ENCODE measurements at regions of chr22 and their contacts with region 1.

Region 1: DNA sequence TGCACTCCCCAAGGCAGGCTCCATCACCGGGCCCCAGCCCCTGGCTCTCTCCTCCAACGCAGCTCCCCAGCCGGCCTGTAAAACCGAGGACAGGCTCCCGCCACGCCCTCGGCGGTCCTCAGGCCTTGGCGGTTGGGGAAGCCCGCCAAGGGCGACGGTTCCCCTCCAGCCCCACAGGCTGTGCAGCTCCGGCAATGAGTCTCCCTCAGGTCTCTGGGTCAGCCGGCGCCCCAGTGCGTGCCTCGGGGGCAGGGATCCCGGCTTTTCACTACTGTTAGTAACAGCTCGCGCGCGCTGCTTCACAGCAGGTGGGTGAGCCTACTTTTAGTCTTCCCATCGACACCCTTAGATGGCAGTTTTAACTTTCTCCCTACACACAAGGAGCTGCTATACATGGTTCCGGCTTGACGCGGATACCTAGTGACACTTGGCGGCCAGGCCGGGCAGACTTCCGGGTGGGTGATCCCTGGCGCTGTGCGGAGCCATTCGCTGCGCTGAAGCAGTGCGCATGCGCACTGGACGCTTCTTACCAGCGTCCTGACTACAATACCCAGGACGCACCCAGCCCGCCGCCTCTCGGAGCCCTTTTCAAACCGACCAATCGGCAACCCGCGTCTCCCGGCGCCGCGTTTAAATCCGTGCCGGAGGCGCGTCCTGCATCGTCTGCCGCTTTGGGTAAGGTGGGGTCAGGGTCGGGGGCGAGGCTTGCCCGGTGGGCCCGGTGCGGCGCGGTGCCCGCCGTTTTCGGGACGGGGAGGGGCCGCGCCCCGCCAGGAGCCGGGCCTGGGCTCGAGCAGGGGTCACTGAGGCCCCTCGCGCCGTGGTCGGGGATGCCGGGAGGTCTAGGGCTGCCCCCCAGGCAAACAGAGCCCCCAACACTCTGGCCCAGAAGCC is at the start of gene GTSE1:
- DNase-seq: peak; percentile 92 to 100
- ATAC-seq: peak; percentile 93 to 100 (median 95)
- H3K4me3 ChIP-seq: peak within 1 kb of the TSS; percentile 50
- H3K4me3 Mint-ChIP-seq: peak within 1 kb of the TSS; percentile 95
- H3K27ac ChIP-seq: peak within 1 kb of the TSS; percentile 85
- H3K27ac Mint-ChIP-seq: peak within 1 kb of the TSS; percentile 99
- H3K4me1 ChIP-seq: peaks cover 45% of the 10 kb centered on the region
- H3K4me1 Mint-ChIP-seq: peaks cover 48 to 55% of the 10 kb centered on the region in 2 donors
- H3K27me3 ChIP-seq: no peaks in the 10 kb centered on the region
- H3K27me3 Mint-ChIP-seq: no peaks in the 10 kb centered on the region
- CTCF ChIP-seq: peak; percentile 27
- total RNA-seq, gene GTSE1: 2.7 to 4.0 (median 2.9) TPM

Region 2: DNA sequence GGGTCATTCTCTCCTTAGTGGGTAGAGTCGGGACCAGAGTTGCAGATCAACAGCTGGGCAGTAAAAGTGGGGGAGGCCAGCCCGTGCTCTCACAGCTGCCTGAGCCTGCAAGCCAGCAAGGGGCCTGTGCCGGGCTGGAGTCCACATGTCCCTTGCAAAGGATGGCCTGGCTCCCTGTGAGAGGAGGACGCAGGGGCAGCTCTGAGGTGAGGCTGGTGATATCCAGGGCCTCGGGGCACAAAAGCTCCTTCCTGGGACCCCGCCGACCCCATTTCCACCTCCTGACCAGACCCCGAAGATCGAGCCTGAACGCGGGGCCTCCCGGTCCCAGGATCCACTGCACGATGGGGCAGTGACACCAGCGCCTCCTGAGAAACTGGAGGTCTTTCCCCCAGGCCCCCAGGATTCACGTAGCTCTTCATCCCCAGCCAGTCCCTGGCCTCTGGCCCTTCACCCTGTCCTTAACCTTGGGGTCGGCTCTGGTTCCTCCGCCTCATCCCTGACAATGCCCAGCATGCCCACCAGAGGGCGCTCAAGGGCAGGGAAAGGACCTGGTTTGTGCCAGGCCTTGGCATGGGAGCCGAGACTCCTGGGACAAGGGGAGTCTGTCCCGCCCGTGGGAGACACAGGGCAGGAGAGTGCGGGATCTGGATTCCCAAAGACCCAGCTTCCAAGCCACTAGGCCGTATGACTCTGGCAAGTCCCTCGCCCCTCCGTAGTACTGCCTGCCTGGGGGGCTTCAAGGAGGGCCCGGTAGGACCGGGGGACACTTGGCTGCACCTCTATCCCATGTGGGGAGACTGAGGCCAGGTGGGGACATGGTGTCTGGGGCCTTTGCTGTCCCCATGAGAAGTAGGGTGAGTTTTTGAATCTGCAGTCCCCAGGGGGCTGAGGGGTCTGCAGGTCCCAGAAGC is 301.8 kb before region 1 on chr22:
- intact Hi-C with region 1: loop called (anchors 10 kb)
- DNase-seq: peak; percentile 77 to 82
- ATAC-seq: peak; percentile 61 to 70 (median 66)
- H3K4me3 ChIP-seq: no peak overlapping the region
- H3K4me3 Mint-ChIP-seq: peak overlapping the region; percentile 21
- H3K27ac ChIP-seq: peak overlapping the region; percentile 56
- H3K27ac Mint-ChIP-seq: peak overlapping the region; percentile 68 to 84
- H3K4me1 ChIP-seq: peaks cover 44% of the 10 kb centered on the region
- H3K4me1 Mint-ChIP-seq: peaks cover 14 to 36% of the 10 kb centered on the region in 2 donors
- H3K27me3 ChIP-seq: no peaks in the 10 kb centered on the region
- H3K27me3 Mint-ChIP-seq: peaks cover 0 to 2% of the 10 kb centered on the region in 2 donors
- CTCF ChIP-seq: peak; percentile 95

Region 3: GRCh38 chr22:46013460-46014416 is 282.8 kb before region 1 on chr22:
- intact Hi-C with region 1: loop called (anchors 5 kb)
- DNase-seq: peak; percentile 82 to 85
- ATAC-seq: peak; percentile 92
- H3K4me3 ChIP-seq: peak overlapping the region; percentile 92
- H3K4me3 Mint-ChIP-seq: peak overlapping the region; percentile 86
- H3K27ac ChIP-seq: peak overlapping the region; percentile 90
- H3K27ac Mint-ChIP-seq: peak overlapping the region; percentile 48 to 93
- H3K4me1 ChIP-seq: peaks cover 20% of the 10 kb centered on the region
- H3K4me1 Mint-ChIP-seq: peaks cover 0 to 13% of the 10 kb centered on the region in 2 donors
- H3K27me3 ChIP-seq: no peaks in the 10 kb centered on the region
- H3K27me3 Mint-ChIP-seq: no peaks in the 10 kb centered on the region
- CTCF ChIP-seq: peak; percentile 64

Region 4: DNA sequence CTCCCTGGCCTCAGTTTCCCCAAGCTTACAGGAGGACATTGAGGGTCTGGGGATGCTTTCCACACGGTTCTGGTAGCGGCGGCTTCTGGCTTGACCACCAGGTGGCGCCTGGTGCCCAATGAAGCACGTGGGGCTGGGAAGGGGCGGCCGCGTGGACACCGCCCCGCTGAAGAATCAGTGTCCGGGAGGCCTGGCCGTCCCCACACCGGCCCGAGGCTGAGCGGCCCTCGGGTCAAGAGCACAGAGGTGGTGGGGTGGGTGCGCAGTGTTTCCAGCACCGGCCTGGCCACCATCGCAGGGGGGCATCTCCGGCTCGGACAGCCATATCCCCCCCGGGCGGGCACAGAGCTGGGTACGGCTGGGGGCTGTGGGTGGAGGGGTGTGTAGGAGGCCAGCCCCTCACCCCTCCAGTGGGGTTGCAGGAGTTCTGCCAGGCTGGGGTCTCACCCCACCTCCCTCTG is 174.0 kb before region 1 on chr22:
- intact Hi-C with region 1: loop called (anchors 5 kb)
- DNase-seq: peak; percentile 71 to 82
- ATAC-seq: peak in 2 of 3 donors; percentile 84 to 89
- H3K4me3 ChIP-seq: no peak overlapping the region
- H3K4me3 Mint-ChIP-seq: no peak overlapping the region
- H3K27ac ChIP-seq: no peak overlapping the region
- H3K27ac Mint-ChIP-seq: no peak overlapping the region
- H3K4me1 ChIP-seq: peaks cover 12% of the 10 kb centered on the region
- H3K4me1 Mint-ChIP-seq: no peaks in the 10 kb centered on the region
- H3K27me3 ChIP-seq: no peaks in the 10 kb centered on the region
- H3K27me3 Mint-ChIP-seq: no peaks in the 10 kb centered on the region
- CTCF ChIP-seq: peak; percentile 97

Region 5: DNA sequence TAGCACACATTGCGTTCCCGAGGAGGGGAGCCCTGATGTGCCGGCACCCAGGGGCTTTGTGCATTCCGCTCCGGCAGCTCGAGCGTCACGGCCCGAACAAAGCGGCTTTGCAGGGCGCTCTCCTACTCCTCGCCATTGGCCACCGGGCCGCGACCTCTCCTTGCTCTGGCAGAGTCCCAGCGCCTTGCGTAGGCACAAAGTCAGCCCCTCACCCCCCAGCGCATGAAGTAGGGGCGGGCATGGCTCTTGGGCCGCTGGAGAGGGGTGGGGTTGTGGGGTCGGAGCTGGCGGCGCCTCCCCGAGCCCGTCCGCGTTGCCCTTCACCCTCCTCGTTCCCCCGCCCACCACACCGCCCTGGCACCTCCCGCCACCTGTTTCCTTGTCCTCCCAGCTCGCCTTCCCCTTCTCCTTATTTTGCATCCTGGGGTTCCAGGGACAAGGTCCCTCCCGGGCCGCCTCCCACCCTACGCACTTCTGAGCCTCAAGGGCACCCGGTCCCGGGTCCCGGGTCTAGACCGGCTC is 146.9 kb before region 1 on chr22:
- intact Hi-C with region 1: loop called (anchors 5 kb)
- DNase-seq: peak; percentile 26 to 64
- ATAC-seq: peak; percentile 12 to 13 (median 12)
- H3K4me3 ChIP-seq: peak overlapping the region; percentile 61
- H3K4me3 Mint-ChIP-seq: peak overlapping the region; percentile 79
- H3K27ac ChIP-seq: peak overlapping the region; percentile 31
- H3K27ac Mint-ChIP-seq: peak overlapping the region; percentile 66 to 84
- H3K4me1 ChIP-seq: peaks cover 22% of the 10 kb centered on the region
- H3K4me1 Mint-ChIP-seq: peaks cover 8 to 21% of the 10 kb centered on the region in 2 donors
- H3K27me3 ChIP-seq: no peaks in the 10 kb centered on the region
- H3K27me3 Mint-ChIP-seq: no peaks in the 10 kb centered on the region
- CTCF ChIP-seq: no peak

Region 6: DNA sequence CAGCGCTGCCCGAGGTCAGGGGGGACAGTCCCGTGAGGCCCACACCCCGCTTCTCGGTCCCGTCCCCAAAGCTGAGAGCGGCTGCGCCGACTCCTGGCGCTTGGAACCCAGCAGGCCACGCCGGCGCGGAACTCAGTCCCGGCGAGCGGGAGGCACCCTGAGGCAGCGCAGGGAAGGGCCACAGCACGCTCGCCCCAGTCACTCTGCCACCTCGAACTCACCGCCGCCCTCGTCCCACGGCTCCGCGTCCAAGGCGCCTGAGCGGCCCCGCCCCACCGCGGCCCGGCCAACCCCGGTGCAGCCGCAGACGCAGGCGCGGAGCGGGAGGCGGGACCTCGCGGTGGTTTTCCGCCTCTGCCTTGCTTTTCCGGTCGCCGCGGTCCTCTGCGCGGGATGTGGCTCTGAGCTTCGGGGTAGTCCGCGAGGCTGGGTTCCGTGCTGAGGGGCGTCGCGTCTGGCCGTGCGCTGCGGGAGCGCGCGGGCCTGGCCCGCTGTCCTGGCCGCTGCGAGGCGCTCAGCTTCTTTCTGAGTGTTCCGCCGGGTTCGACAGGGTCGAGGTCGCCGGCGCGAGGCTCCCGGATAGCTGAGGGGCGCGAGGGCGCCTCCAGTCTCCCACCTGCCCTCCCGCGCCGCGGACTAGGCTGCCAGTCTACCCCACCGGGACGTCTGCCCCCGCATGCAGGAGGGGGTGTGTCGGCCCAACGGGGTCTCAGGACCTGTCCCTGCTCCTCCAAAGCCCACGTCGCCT is 46.3 kb before region 1 on chr22 and contains the start of gene CDPF1:
- intact Hi-C with region 1: loop called (anchors 1 kb)
- DNase-seq: peak; percentile 86 to 95
- ATAC-seq: peak; percentile 88 to 93 (median 92)
- H3K4me3 ChIP-seq: peak within 1 kb of the TSS; percentile 74
- H3K4me3 Mint-ChIP-seq: peak within 1 kb of the TSS; percentile 88
- H3K27ac ChIP-seq: peak within 1 kb of the TSS; percentile 66
- H3K27ac Mint-ChIP-seq: peak within 1 kb of the TSS; percentile 45 to 93
- H3K4me1 ChIP-seq: peaks cover 16% of the 10 kb centered on the region
- H3K4me1 Mint-ChIP-seq: peaks cover 21 to 44% of the 10 kb centered on the region in 2 donors
- H3K27me3 ChIP-seq: no peaks in the 10 kb centered on the region
- H3K27me3 Mint-ChIP-seq: no peaks in the 10 kb centered on the region
- CTCF ChIP-seq: no peak
- total RNA-seq, gene CDPF1: 5.0 to 11.4 (median 7.2) TPM

Region 7: GRCh38 chr22:46280999-46281623 is 15.4 kb before region 1 on chr22:
- intact Hi-C with region 1: loop called (anchors 2 kb)
- DNase-seq: peak; percentile 72 to 81
- ATAC-seq: peak; percentile 82 to 94 (median 92)
- H3K4me3 ChIP-seq: peak overlapping the region; percentile 60
- H3K4me3 Mint-ChIP-seq: peak overlapping the region; percentile 96
- H3K27ac ChIP-seq: peak overlapping the region; percentile 97
- H3K27ac Mint-ChIP-seq: peak overlapping the region; percentile 97 to 99
- H3K4me1 ChIP-seq: peaks cover 93% of the 10 kb centered on the region
- H3K4me1 Mint-ChIP-seq: peaks cover 76 to 79% of the 10 kb centered on the region in 2 donors
- H3K27me3 ChIP-seq: no peaks in the 10 kb centered on the region
- H3K27me3 Mint-ChIP-seq: no peaks in the 10 kb centered on the region
- CTCF ChIP-seq: no peak

Region 8: DNA sequence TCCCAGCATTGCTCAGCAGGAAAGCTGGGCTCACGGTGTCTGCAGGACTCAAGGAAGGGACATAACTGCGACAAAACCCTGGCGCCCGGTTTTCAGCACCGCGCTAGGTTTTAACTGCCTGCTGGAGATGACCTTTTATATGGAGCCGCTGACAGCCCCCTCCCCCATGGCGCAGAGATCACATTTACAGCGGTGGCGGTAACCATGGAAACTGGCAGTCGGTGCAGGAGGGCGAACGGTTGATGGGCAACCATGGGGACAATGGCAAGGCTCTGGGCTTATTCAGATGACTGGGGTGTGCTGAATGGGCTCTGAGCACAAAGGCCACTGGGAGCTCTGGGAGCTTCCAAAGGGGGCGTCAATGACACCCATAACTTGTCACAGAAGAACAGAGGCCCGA is 203.7 kb after region 1 on chr22:
- intact Hi-C with region 1: no loop called
- DNase-seq: no peak
- ATAC-seq: no peak
- H3K4me3 ChIP-seq: no peak overlapping the region
- H3K4me3 Mint-ChIP-seq: no peak overlapping the region
- H3K27ac ChIP-seq: no peak overlapping the region
- H3K27ac Mint-ChIP-seq: no peak overlapping the region
- H3K4me1 ChIP-seq: peaks cover 12% of the 10 kb centered on the region
- H3K4me1 Mint-ChIP-seq: peaks cover 9 to 14% of the 10 kb centered on the region in 2 donors
- H3K27me3 ChIP-seq: peaks cover 4% of the 10 kb centered on the region
- H3K27me3 Mint-ChIP-seq: peaks cover 16 to 25% of the 10 kb centered on the region in 2 donors
- CTCF ChIP-seq: no peak

Region 9: DNA sequence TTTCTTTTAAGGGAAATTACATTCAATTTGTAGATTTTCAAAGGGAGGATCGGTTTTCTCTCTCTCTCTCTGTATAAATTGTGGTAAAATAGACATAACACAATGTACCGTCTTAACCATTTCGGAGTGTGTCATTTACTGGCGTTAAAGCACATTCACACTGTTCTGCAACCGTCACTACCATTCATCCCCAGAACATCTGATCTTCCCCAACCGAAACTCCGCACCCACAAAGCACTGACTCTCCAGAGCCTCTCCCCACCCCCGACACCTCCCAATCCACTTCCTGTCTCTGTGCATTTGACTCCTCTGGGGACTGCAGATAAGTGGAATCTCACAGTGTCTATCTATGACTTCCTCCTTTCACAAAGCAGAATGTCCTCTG is 307.8 kb after region 1 on chr22:
- intact Hi-C with region 1: no loop called
- DNase-seq: peak; percentile 28 to 60
- ATAC-seq: peak; percentile 86 to 90 (median 88)
- H3K4me3 ChIP-seq: no peak overlapping the region
- H3K4me3 Mint-ChIP-seq: peak overlapping the region; percentile 82
- H3K27ac ChIP-seq: peak overlapping the region; percentile 17
- H3K27ac Mint-ChIP-seq: peak overlapping the region; percentile 81 to 86
- H3K4me1 ChIP-seq: peaks cover 23% of the 10 kb centered on the region
- H3K4me1 Mint-ChIP-seq: peaks cover 10 to 28% of the 10 kb centered on the region in 2 donors
- H3K27me3 ChIP-seq: no peaks in the 10 kb centered on the region
- H3K27me3 Mint-ChIP-seq: no peaks in the 10 kb centered on the region
- CTCF ChIP-seq: no peak

Measured in natural killer cell (primary cell).